ENCODE measurements at regions of chr3 and their contacts with region 1.

Region 1: GRCh38 chr3:184298759-184299496 is at the start of gene PSMD2:
- DNase-seq: peak; percentile 97 to 99 (median 98)
- ATAC-seq: peak; percentile 99 to 100 (median 99)
- H3K4me3 ChIP-seq: peak within 1 kb of the TSS; percentile 66 to 98 (median 92)
- H3K27ac ChIP-seq: peak within 1 kb of the TSS; percentile 30 to 90 (median 84)
- H3K4me1 ChIP-seq: peaks cover 0 to 19% (median 13%) of the 10 kb centered on the region in 12 donors
- H3K27me3 ChIP-seq: no peaks in the 10 kb centered on the region
- CTCF ChIP-seq: no peak
- POLR2A ChIP-seq: peak; percentile 25 to 76
- total RNA-seq, gene PSMD2: 198 to 314 (median 232) TPM

Region 2: DNA sequence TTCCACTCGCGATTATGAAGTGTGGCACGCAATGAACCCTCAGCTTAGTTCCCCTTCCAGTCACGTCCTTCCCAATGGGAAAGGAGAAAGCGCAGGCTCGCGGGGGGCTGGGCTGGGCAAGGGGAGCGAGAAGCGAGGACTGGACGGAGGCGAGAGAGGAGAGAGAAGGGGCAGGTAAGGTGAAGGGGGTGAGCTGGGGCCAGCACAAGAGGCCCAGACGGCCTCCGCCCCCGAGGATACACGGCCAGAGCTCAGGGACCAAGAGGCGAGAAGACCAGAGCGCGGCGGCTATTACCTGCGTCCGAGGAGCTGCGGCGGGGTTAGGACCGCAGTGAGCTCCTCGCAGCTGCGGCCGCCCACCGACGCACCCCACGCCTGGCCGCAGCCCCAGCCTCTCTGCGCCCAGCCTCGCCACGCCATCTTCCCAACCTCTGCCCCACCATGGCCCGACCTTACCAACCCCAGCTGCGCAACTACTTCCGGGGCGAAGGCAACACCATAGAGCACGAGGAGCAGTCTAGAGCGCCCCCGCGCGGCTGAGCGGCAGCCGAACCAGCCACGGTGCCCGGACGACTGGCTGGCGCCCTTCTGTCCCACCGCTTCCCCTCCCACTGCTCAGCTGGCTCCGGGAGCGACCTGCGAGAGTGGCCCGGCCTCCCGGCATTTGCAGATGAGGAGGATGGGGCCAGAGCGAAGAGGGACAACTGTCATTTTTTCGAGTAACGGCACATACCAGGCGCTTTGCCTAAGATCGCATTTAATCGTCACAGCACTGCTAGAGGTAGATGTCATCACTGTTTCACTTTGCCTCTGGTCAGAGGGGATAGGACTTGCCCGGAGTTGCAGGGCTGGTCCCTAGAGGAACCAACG is 414.3 kb before region 1 on chr3 and contains the start of gene PARL:
- intact Hi-C with region 1: loop called in 1 of 10 experiments (anchors 5 kb)
- DNase-seq: peak; percentile 95 to 98 (median 97)
- ATAC-seq: peak; percentile 100
- H3K4me3 ChIP-seq: peak within 1 kb of the TSS; percentile 54 to 99 (median 92)
- H3K27ac ChIP-seq: peak within 1 kb of the TSS; percentile 35 to 88 (median 82)
- H3K4me1 ChIP-seq: peaks cover 0 to 42% (median 23%) of the 10 kb centered on the region in 12 donors
- H3K27me3 ChIP-seq: no peaks in the 10 kb centered on the region
- CTCF ChIP-seq: peak; percentile 89 to 99 (median 96)
- POLR2A ChIP-seq: peak in 1 of 2 donors; percentile 57
- total RNA-seq, gene PARL: 37.9 to 62.2 (median 53.8) TPM

Region 3: DNA sequence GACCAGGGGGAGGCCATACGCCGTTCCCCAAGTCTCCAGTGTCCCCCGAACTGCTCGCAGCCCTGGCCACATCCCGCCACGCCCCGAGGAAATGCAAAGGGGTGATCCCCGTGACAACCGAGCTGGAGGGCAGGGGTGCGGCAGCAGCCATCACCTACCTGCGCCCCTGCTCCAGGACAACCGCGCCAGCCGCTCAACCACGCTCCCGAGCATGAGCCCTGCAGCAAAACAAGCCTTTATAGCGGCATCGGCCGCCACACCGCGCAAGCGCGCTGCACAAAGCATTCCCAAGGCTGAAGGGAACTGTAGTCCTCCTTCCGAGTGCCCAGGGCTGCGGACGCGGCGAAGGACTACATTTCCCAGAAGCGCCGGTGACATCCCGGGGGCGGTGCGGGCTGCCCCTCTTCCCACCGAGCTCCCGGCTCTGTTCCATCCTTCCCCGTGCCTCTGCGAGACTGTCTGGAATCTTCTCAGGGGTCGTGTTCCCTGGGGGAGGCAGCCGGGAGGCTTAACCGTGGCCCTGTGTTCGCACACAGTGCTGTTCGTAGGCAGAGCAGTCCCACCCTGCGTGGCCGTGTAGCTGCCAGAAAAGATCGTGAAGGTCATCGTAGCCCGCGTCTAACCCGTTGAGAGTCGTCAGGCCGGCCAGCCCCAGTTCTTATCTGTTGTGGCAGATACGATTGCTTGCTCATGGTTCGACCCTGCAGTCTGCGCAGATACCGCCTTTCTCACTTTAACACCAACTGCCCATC is 281.1 kb before region 1 on chr3 and contains the start of gene ABCC5:
- intact Hi-C with region 1: loop called in 1 of 10 experiments (anchors 5 kb)
- DNase-seq: peak; percentile 94 to 97 (median 96)
- ATAC-seq: peak; percentile 96 to 98 (median 98)
- H3K4me3 ChIP-seq: peak within 1 kb of the TSS; percentile 59 to 99 (median 89)
- H3K27ac ChIP-seq: peak within 1 kb of the TSS; percentile 71 to 93 (median 84)
- H3K4me1 ChIP-seq: peaks cover 0 to 29% (median 15%) of the 10 kb centered on the region in 12 donors
- H3K27me3 ChIP-seq: no peaks in the 10 kb centered on the region
- CTCF ChIP-seq: peak in 9 of 12 donors; percentile 3 to 54 (median 41)
- POLR2A ChIP-seq: peak in 1 of 2 donors; percentile 67
- total RNA-seq, gene ABCC5: 20.8 to 61.7 (median 34.3) TPM

Region 4: DNA sequence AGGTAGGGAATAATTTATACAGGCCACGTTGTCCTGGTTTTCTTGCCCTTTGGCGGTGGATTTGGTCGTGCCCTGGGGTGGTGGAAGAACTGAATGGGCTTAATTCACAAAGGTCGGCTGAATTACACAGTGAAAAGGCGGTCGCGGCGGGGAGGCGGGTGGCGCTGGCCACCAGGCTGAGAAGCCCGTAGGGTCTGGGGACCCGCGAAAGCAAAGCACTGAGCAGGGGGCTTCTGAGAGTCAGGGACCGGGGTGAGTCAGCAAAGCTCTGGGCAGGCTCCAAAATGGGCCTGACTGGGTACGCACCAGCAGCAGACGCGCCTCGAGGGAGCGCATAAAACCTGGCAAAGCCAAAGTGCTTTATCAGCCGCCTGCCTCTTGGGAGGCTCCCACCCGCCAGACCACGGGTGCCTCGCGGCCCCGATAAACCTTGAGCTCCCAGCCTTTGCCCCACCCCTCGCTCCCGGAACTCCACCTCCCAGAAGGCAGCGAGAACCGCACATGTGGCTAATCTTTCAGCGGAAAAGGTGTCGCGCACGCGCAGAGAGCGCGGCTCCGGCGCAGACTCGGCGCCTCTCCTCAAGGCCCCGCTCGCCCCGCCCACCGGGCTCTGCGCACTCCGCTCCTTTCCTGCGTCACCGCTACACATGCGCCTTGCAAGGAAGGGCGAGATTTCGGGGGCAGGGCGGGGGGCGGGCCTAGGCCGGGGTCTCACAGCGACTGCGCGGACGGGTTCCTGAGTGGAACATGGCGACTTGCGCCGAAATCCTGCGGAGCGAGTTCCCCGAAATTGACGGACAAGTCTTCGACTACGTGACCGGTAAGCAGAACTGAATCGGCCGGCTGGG is 113.2 kb before region 1 on chr3 and contains the start of gene ABCF3:
- intact Hi-C with region 1: loop called in 1 of 10 experiments (anchors 5 kb)
- DNase-seq: peak; percentile 99 to 100 (median 100)
- ATAC-seq: peak; percentile 98
- H3K4me3 ChIP-seq: peak within 1 kb of the TSS; percentile 55 to 99 (median 92)
- H3K27ac ChIP-seq: peak within 1 kb of the TSS; percentile 54 to 96 (median 92)
- H3K4me1 ChIP-seq: peaks cover 0 to 33% (median 24%) of the 10 kb centered on the region in 12 donors
- H3K27me3 ChIP-seq: no peaks in the 10 kb centered on the region
- CTCF ChIP-seq: no peak
- POLR2A ChIP-seq: peak in 1 of 2 donors; percentile 73
- total RNA-seq, gene ABCF3: 58.2 to 81.9 (median 69.2) TPM

Region 5: GRCh38 chr3:184314363-184314699 is 15.4 kb after region 1 on chr3 and contains the start of gene EIF4G1:
- intact Hi-C with region 1: loop called in 2 of 10 experiments (anchors 1 kb)
- DNase-seq: peak; percentile 96 to 98 (median 96)
- ATAC-seq: peak; percentile 79 to 91 (median 86)
- H3K4me3 ChIP-seq: peak within 1 kb of the TSS; percentile 46 to 92 (median 88)
- H3K27ac ChIP-seq: peak within 1 kb of the TSS; percentile 89 to 99 (median 96)
- H3K4me1 ChIP-seq: peaks cover 0 to 43% (median 37%) of the 10 kb centered on the region in 12 donors
- H3K27me3 ChIP-seq: no peaks in the 10 kb centered on the region
- CTCF ChIP-seq: no peak
- POLR2A ChIP-seq: peak in 1 of 2 donors; percentile 31
- total RNA-seq, gene EIF4G1: 211 to 406 (median 229) TPM

Region 6: GRCh38 chr3:184345317-184346144 is 46.6 kb after region 1 on chr3:
- intact Hi-C with region 1: loop called in 1 of 10 experiments (anchors 5 kb)
- DNase-seq: peak in 4 of 5 donors; percentile 61 to 81 (median 70)
- ATAC-seq: peak; percentile 70 to 87 (median 78)
- H3K4me3 ChIP-seq: no peak overlapping the region
- H3K27ac ChIP-seq: peak overlapping the region in 4 of 12 donors; percentile 43 to 55 (median 50)
- H3K4me1 ChIP-seq: peaks cover 0 to 17% (median 8%) of the 10 kb centered on the region in 12 donors
- H3K27me3 ChIP-seq: no peaks in the 10 kb centered on the region
- CTCF ChIP-seq: peak; percentile 14 to 58 (median 34)
- POLR2A ChIP-seq: no peak

Region 7: GRCh38 chr3:184362668-184363540 is 64.0 kb after region 1 on chr3:
- intact Hi-C with region 1: no loop called
- DNase-seq: peak; percentile 95 to 97 (median 97)
- ATAC-seq: peak; percentile 77 to 85 (median 79)
- H3K4me3 ChIP-seq: peak overlapping the region; percentile 63 to 100 (median 91)
- H3K27ac ChIP-seq: peak overlapping the region; percentile 97 to 100 (median 100)
- H3K4me1 ChIP-seq: peaks cover 0 to 31% (median 22%) of the 10 kb centered on the region in 12 donors
- H3K27me3 ChIP-seq: no peaks in the 10 kb centered on the region
- CTCF ChIP-seq: peak in 11 of 12 donors; percentile 35 to 80 (median 63)
- POLR2A ChIP-seq: peak in 1 of 2 donors; percentile 83

Measured in heart left ventricle (tissue), 16 donors.